ENCODE measurements at regions of chr9 and their contacts with region 1.

Region 1: GRCh38 chr9:115164511-115164974 is 46.6 kb upstream of the TNC start:
- DNase-seq: peak; percentile 29 to 94 (median 76)

Region 2: DNA sequence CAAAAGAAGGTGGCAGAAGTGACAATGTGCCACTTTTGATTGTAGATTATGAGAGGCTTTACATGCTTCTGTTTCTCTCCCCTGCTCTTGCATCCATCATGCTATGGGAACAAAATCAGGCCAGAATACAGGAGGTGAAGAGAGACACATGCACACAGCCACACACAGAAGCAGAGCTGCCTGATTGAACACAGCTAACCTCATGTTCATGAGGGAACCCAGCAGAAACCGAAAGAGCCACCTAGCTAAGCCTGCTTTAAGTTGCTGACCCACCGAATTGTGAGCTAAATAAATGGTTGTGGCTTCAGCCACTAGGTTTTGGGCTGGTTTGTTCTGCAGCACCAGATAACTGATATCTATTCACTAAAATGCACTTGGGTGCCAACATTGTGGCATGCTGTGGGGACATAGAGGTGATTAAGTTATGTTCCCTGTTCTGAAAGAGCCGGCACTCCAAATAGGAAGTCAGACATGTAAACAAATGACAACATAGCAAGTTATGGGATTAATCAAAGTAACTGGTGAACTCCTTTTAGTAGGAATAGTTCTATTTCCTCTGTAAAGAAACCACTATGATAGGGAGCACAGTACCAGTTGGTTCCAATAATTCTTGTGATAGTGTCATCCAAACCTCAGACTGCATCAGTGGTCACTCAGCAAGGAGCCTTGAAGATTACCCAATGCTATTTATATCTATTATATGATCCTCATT is 47.0 kb after region 1 on chr9:
- intact Hi-C with region 1: loop called (anchors 5 kb)
- DNase-seq: no peak

Region 3: DNA sequence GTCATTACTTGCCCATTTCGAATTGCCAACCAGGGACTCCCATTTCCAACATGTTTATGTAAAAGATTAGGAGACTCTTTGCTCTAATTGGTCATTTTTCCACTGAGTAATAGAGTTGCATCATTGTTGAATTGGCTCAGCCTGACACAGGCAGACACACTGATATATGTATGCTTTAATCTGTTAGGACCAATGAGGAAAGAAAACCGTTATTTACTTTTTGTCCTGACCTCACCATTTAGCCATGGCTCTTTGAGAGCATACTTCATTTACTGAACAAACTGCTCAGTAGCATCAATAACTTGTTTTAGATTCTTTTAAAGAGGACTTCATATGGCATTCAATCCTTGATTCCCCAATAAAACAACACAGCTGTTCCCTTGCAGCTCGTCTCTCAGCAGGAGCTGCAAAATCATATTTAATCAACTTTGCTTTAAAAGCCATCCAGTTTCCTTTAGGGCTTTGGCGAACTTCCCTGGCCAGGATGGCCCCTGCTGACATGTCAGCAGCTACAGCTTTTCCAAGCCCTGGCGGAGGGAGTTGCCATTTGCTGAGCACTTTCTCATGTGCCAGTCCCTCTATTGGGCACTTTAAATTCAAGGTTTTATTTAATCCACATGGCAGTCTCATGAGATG is 204.9 kb after region 1 on chr9:
- intact Hi-C with region 1: no loop called
- DNase-seq: no peak

Measured in posterior cingulate gyrus (tissue), 11 donors.